ENCODE measurements at regions of chr10 and their contacts with region 1.

Region 1: GRCh38 chr10:133309111-133309719 is 501 bp downstream of the ZNF511 start:
- DNase-seq: peak; percentile 91 to 96
- ATAC-seq: peak; percentile 94 to 97 (median 95)
- H3K4me3 ChIP-seq: peak overlapping the region; percentile 79 to 100 (median 96)
- H3K27ac ChIP-seq: peak overlapping the region; percentile 87 to 99 (median 98)
- H3K4me1 ChIP-seq: peaks cover 0 to 42% (median 32%) of the 10 kb centered on the region in 9 donors
- H3K27me3 ChIP-seq: no peaks in the 10 kb centered on the region
- CTCF ChIP-seq: no peak

Region 2: GRCh38 chr10:133329491-133330202 is 20.4 kb after region 1 on chr10:
- intact Hi-C with region 1: loop called in 1 of 10 experiments (anchors 1 kb)
- DNase-seq: peak; percentile 82 to 88
- ATAC-seq: peak; percentile 70 to 91 (median 87)
- H3K4me3 ChIP-seq: peak overlapping the region in 6 of 10 donors; percentile 10 to 39 (median 23)
- H3K27ac ChIP-seq: no peak overlapping the region
- H3K4me1 ChIP-seq: peaks cover 5 to 24% (median 15%) of the 10 kb centered on the region in 9 donors
- H3K27me3 ChIP-seq: peaks cover 31 to 82% (median 81%) of the 10 kb centered on the region in 7 donors
- CTCF ChIP-seq: peak; percentile 91 to 99 (median 96)

Region 3: GRCh38 chr10:133377818-133378250 is 68.6 kb after region 1 on chr10:
- intact Hi-C with region 1: loop called in 1 of 10 experiments (anchors 2 kb)
- DNase-seq: no peak
- ATAC-seq: peak in 6 of 8 donors; percentile 0 to 7 (median 2)
- H3K4me3 ChIP-seq: peak overlapping the region; percentile 68 to 97 (median 86)
- H3K27ac ChIP-seq: peak overlapping the region in 9 of 10 donors; percentile 63 to 91 (median 82)
- H3K4me1 ChIP-seq: peaks cover 3 to 32% (median 21%) of the 10 kb centered on the region in 9 donors
- H3K27me3 ChIP-seq: no peaks in the 10 kb centered on the region
- CTCF ChIP-seq: no peak

Region 4: DNA sequence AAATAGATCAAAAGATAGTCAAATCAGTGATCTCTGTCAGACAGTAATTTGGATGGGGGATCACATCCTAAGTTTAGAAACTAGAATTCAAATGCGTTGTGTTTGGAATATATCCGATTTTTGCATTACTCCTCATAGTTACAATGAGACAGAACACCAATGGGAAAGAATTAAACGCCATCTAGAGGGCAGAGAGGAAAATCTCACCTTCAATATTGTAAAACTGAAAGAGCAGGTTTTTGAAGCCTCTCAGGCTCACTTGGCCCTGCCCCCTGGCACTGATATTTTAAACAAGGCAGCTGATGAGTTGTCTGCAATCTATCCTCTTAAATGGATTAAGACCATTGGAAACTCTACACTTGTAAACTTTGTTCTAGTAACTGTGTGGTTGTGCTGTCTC is 299.6 kb after region 1 on chr10:
- intact Hi-C with region 1: loop called in 1 of 10 experiments (anchors 5 kb)
- DNase-seq: no peak
- ATAC-seq: peak in 1 of 8 donors; percentile 33
- H3K4me3 ChIP-seq: no peak overlapping the region
- H3K27ac ChIP-seq: no peak overlapping the region
- H3K4me1 ChIP-seq: no peaks in the 10 kb centered on the region
- H3K27me3 ChIP-seq: peaks cover 0 to 79% (median 47%) of the 10 kb centered on the region in 7 donors
- CTCF ChIP-seq: peak; percentile 7 to 63 (median 56)